A673 (cell line): ENCODE measurements at regions of chr19 and their contacts with region 1.

Region 1: GRCh38 chr19:49869441-49870176 is 2.2 kb upstream of the PNKP start:
- DNase-seq: peak; percentile 100
- H3K4me3 ChIP-seq: peak overlapping the region; percentile 52
- H3K27ac ChIP-seq: peak overlapping the region; percentile 90
- H3K4me1 ChIP-seq: peaks cover 33% of the 10 kb centered on the region
- H3K27me3 ChIP-seq: no peaks in the 10 kb centered on the region
- CTCF ChIP-seq: no peak

Region 2: DNA sequence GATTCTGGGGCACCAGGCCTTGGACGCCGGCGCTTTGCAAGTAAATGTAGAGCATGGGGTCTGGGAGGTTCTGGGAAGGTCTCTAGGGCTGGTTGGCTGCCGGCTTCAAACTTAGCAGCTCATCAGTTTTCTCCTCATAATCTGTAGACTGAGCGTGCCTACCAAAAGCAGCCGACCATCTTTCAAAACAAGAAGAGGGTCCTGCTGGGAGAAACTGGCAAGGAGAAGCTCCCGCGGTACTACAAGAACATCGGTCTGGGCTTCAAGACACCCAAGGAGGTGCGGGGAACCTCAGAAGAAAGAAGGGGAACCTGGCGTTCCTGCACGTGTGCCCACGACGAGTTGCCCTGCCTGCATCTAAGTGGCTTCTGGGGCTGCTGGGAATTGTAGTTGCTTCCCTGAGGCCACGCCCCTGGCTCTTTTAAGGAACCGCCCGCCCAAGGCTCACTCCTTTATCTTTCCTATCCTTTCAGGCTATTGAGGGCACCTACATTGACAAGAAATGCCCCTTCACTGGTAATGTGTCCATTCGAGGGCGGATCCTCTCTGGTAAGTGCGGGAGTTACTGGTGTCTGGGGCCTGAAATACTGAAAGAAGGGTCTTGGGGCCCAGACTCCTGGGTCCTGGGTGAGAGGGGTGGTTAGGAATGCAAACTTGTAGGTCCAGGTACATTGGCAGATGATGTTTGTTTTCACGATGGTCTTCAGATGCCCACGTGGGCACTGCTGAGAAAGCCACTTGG is 372.4 kb before region 1 on chr19:
- CTCF ChIA-PET with region 1: no interaction called
- POLR2A ChIA-PET with region 1: interaction called, 13 read pairs
- intact Hi-C with region 1: loop called (anchors 10 kb)
- DNase-seq: peak; percentile 87
- H3K4me3 ChIP-seq: peak overlapping the region; percentile 82
- H3K27ac ChIP-seq: peak overlapping the region; percentile 99
- H3K4me1 ChIP-seq: peaks cover 33% of the 10 kb centered on the region
- H3K27me3 ChIP-seq: no peaks in the 10 kb centered on the region
- CTCF ChIP-seq: no peak

Region 3: GRCh38 chr19:49502866-49503581 is 366.6 kb before region 1 on chr19:
- CTCF ChIA-PET with region 1: interaction called, 16 read pairs
- POLR2A ChIA-PET with region 1: no interaction called
- intact Hi-C with region 1: loop called (anchors 10 kb)
- DNase-seq: peak; percentile 90
- H3K4me3 ChIP-seq: no peak overlapping the region
- H3K27ac ChIP-seq: peak overlapping the region; percentile 18
- H3K4me1 ChIP-seq: peaks cover 44% of the 10 kb centered on the region
- H3K27me3 ChIP-seq: no peaks in the 10 kb centered on the region
- CTCF ChIP-seq: peak; percentile 71

Region 4: DNA sequence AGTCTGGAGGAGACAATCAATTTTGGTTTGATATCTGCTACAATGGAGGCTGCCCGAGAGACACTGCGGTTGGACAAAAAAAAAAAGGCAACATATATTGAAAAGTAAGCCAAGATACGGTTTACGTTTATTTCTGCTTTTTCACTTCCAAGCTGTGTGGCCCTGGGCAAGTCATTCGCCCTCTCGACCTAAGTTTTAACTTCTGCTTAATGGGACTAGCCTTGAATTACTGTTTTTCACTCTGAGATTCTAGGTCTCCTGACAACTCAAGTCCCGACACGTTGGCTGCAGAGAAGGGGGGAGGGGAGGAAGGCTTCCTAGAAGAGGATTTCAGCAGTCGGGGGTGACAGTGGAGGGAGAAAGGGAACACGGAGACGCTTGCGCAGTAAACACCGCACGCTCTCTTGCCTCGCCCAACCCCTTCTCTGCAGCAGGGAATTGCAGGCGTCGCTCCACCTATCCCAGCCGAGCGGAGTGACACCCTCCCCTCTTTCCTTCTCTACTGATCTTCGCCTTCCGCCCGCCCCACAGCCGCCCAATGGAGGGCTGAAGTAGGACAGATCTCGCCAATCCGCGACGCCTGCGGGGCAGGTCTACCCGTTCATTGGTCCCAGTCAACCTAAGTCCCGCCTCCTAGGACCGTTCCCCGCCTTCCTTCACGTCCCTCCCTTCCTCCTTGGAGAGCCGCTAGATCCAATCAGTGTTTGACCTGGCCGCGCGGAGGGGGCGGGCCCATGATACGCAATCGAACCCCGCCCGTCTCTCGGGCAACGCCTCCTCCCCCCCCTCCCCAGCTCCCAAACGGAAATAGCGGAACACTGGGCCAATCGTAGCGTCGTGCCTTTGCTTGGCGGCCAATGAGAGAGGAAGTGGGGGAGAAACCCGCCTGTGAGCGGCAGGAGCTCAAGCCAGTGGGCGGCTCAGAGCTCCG is 103.3 kb before region 1 on chr19:
- CTCF ChIA-PET with region 1: no interaction called
- POLR2A ChIA-PET with region 1: no interaction called
- intact Hi-C with region 1: loop called (anchors 5 kb)
- DNase-seq: peak; percentile 100
- H3K4me3 ChIP-seq: peak overlapping the region; percentile 99
- H3K27ac ChIP-seq: peak overlapping the region; percentile 95
- H3K4me1 ChIP-seq: peaks cover 15% of the 10 kb centered on the region
- H3K27me3 ChIP-seq: no peaks in the 10 kb centered on the region
- CTCF ChIP-seq: no peak

Region 5: DNA sequence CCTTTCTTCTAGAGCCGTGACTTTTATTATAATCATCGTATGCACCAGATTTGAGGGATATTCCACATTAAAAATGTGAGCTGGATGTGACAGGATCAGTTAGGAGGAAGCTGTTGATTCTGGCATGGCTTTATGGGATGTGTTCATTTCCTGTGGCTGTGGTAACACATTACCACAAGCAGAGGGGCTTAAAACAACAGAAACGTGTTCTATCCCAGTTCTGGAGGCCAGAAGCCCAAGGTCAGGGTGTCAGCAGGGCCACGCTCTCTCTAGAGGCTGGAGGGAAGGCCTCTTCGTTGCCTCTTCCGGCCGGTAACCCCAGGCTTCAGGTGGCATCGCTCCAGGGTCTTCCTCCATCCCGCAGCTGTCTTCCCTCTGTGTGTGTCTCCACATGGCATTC is 37.1 kb before region 1 on chr19:
- CTCF ChIA-PET with region 1: no interaction called
- POLR2A ChIA-PET with region 1: interaction called, 17 read pairs
- intact Hi-C with region 1: no loop called
- DNase-seq: no peak
- H3K4me3 ChIP-seq: no peak overlapping the region
- H3K27ac ChIP-seq: no peak overlapping the region
- H3K4me1 ChIP-seq: no peaks in the 10 kb centered on the region
- H3K27me3 ChIP-seq: no peaks in the 10 kb centered on the region
- CTCF ChIP-seq: no peak

Region 6: GRCh38 chr19:49890349-49891311 is 21.0 kb after region 1 on chr19:
- CTCF ChIA-PET with region 1: no interaction called
- POLR2A ChIA-PET with region 1: no interaction called
- intact Hi-C with region 1: no loop called
- DNase-seq: no peak
- H3K4me3 ChIP-seq: peak overlapping the region; percentile 20
- H3K27ac ChIP-seq: no peak overlapping the region
- H3K4me1 ChIP-seq: no peaks in the 10 kb centered on the region
- H3K27me3 ChIP-seq: no peaks in the 10 kb centered on the region
- CTCF ChIP-seq: peak; percentile 10; the same call in 1 of the 2 replicates

Region 7: GRCh38 chr19:49929611-49930482 is 60.2 kb after region 1 on chr19:
- CTCF ChIA-PET with region 1: no interaction called
- POLR2A ChIA-PET with region 1: interaction called, 10 read pairs
- intact Hi-C with region 1: no loop called
- DNase-seq: peak; percentile 96
- H3K4me3 ChIP-seq: peak overlapping the region; percentile 79
- H3K27ac ChIP-seq: peak overlapping the region; percentile 100
- H3K4me1 ChIP-seq: peaks cover 35% of the 10 kb centered on the region
- H3K27me3 ChIP-seq: no peaks in the 10 kb centered on the region
- CTCF ChIP-seq: no peak

Region 8: GRCh38 chr19:51338563-51339312 is 1469.1 kb after region 1 on chr19:
- CTCF ChIA-PET with region 1: interaction called, 15 read pairs
- POLR2A ChIA-PET with region 1: no interaction called
- intact Hi-C with region 1: no loop called
- DNase-seq: peak; percentile 86
- H3K4me3 ChIP-seq: peak overlapping the region; percentile 61
- H3K27ac ChIP-seq: peak overlapping the region; percentile 24
- H3K4me1 ChIP-seq: peaks cover 8% of the 10 kb centered on the region
- H3K27me3 ChIP-seq: no peaks in the 10 kb centered on the region
- CTCF ChIP-seq: peak; percentile 89